Caco-2 (cell line): ENCODE measurements at regions of chr2 and their contacts with region 1.

Region 1: DNA sequence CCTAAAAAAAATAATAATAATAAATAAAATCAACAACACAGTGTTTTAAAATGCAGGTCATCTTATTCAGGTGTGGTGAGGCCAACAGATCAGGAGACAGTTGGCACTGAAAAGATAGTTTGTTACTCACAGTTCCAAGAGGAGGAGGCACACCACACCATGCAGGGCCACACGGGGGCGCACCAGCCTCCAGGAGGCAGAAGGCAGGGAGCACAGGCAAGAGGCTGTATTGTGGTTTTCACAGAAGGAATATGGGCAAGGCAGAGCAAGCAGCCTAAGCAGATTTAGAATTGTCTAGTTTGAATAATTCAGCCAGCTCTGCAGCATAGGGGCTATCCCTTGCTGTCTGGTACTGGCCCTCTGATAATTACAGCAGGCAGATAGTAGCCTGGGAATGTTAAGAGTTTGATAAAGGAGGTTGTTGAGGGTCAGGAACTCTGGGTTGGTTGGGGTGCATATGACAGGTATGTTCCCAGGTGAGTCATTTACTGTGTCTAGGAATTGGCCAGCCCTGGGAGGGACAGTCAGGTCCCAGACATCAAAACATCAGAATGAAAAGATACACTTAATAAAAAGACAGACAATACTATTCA is 31.3 kb downstream of the KIAA2012 start:
- DNase-seq: peak; percentile 78 to 85
- H3K4me3 ChIP-seq: no peak overlapping the region
- H3K4me3 Mint-ChIP-seq: no peak overlapping the region
- H3K27ac Mint-ChIP-seq: peak overlapping the region; percentile 27
- H3K4me1 ChIP-seq: no peaks in the 10 kb centered on the region
- H3K4me1 Mint-ChIP-seq: no peaks in the 10 kb centered on the region
- H3K27me3 ChIP-seq: no peaks in the 10 kb centered on the region
- H3K27me3 Mint-ChIP-seq: no peaks in the 10 kb centered on the region
- CTCF ChIP-seq: peak; percentile 77 to 81

Region 2: DNA sequence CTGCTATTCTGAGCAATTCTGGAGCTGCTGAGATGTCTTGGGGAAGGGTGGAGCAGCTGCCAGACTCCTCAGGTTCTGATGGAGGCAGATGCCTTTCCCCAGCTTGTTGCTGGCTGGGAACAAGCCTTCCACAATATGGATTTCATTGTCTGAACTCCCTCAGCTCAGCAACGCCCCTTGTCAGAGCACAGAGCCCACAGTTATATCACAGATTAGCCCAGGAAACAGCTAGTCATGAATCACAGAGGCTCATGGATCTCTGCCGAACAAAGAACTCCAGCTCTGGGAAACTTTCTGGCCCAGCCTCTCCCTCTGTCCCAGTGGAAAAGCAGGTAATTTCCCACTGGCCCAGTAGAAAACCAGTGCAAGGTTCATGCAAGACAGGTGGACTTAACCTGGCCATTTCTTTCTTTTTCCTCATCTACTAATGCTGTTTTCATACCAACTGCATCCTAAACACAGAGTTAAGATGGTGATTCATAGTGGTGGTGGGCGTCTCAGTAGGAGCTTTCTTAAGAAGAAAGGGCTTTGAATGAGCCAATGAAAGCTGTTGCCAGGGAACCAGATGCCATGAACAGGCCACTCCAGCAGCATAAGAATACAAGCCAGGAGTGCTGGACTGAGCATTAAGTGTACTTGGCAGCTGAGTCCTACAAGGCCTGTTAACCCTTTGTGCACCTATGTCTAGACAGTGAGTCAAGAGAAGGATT is 40.0 kb before region 1 on chr2:
- CTCF ChIA-PET with region 1: no interaction called
- POLR2A ChIA-PET with region 1: no interaction called
- intact Hi-C with region 1: no loop called
- DNase-seq: no peak
- H3K4me3 ChIP-seq: no peak overlapping the region
- H3K4me3 Mint-ChIP-seq: no peak overlapping the region
- H3K27ac Mint-ChIP-seq: no peak overlapping the region
- H3K4me1 ChIP-seq: no peaks in the 10 kb centered on the region
- H3K4me1 Mint-ChIP-seq: no peaks in the 10 kb centered on the region
- H3K27me3 ChIP-seq: no peaks in the 10 kb centered on the region
- H3K27me3 Mint-ChIP-seq: no peaks in the 10 kb centered on the region
- CTCF ChIP-seq: no peak

Region 3: GRCh38 chr2:202158796-202159195 is 54.4 kb after region 1 on chr2:
- CTCF ChIA-PET with region 1: interaction called, 7 read pairs
- POLR2A ChIA-PET with region 1: no interaction called
- intact Hi-C with region 1: loop called (anchors 1 kb)
- DNase-seq: peak; percentile 46 to 57
- H3K4me3 ChIP-seq: no peak overlapping the region
- H3K4me3 Mint-ChIP-seq: no peak overlapping the region
- H3K27ac Mint-ChIP-seq: no peak overlapping the region
- H3K4me1 ChIP-seq: peaks cover 23% of the 10 kb centered on the region
- H3K4me1 Mint-ChIP-seq: peaks cover 19% of the 10 kb centered on the region
- H3K27me3 ChIP-seq: no peaks in the 10 kb centered on the region
- H3K27me3 Mint-ChIP-seq: no peaks in the 10 kb centered on the region
- CTCF ChIP-seq: peak in 1 of 2 experiments; percentile 46

Region 4: GRCh38 chr2:202429164-202429980 is 325.0 kb after region 1 on chr2:
- CTCF ChIA-PET with region 1: no interaction called
- POLR2A ChIA-PET with region 1: no interaction called
- intact Hi-C with region 1: no loop called
- DNase-seq: no peak
- H3K4me3 ChIP-seq: no peak overlapping the region
- H3K4me3 Mint-ChIP-seq: no peak overlapping the region
- H3K27ac Mint-ChIP-seq: no peak overlapping the region
- H3K4me1 ChIP-seq: no peaks in the 10 kb centered on the region
- H3K4me1 Mint-ChIP-seq: no peaks in the 10 kb centered on the region
- H3K27me3 ChIP-seq: no peaks in the 10 kb centered on the region
- H3K27me3 Mint-ChIP-seq: no peaks in the 10 kb centered on the region
- CTCF ChIP-seq: no peak

Region 5: GRCh38 chr2:202560200-202560599 is 455.8 kb after region 1 on chr2:
- CTCF ChIA-PET with region 1: no interaction called
- POLR2A ChIA-PET with region 1: interaction called, 15 read pairs
- intact Hi-C with region 1: no loop called
- DNase-seq: no peak
- H3K4me3 ChIP-seq: no peak overlapping the region
- H3K4me3 Mint-ChIP-seq: no peak overlapping the region
- H3K27ac Mint-ChIP-seq: no peak overlapping the region
- H3K4me1 ChIP-seq: no peaks in the 10 kb centered on the region
- H3K4me1 Mint-ChIP-seq: no peaks in the 10 kb centered on the region
- H3K27me3 ChIP-seq: no peaks in the 10 kb centered on the region
- H3K27me3 Mint-ChIP-seq: no peaks in the 10 kb centered on the region
- CTCF ChIP-seq: no peak